Common myeloid progenitor, CD34-positive (primary cell): ENCODE measurements at regions of chr16 and their contacts with region 1.

Region 1: DNA sequence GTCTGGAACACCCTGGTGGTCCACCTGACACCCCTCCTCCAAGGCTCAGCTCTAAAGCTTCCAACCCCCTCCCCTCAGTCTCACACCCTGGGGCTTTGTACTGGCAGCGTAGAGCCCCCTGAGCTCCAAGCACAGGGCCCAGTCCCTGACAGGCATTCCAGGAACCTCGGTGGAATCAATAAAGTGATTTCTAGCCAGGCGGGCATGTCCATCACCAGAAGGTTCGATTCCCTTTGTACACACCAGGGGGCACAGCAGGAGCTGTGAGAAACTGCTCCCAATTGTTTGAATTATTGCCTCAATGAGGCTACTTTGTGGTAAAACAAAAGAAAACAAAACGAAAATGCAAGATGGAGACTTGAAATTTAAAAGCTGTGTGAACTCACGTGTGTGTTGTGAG is 51.8 kb downstream of the SMPD3 start:
- DNase-seq: peak; percentile 48 to 72 (median 70)
- H3K4me3 ChIP-seq: no peak overlapping the region
- H3K27ac ChIP-seq: no peak overlapping the region
- H3K4me1 ChIP-seq: peaks cover 0 to 2% (median 0%) of the 10 kb centered on the region in 4 experiments
- H3K27me3 ChIP-seq: no peaks in the 10 kb centered on the region

Region 2: DNA sequence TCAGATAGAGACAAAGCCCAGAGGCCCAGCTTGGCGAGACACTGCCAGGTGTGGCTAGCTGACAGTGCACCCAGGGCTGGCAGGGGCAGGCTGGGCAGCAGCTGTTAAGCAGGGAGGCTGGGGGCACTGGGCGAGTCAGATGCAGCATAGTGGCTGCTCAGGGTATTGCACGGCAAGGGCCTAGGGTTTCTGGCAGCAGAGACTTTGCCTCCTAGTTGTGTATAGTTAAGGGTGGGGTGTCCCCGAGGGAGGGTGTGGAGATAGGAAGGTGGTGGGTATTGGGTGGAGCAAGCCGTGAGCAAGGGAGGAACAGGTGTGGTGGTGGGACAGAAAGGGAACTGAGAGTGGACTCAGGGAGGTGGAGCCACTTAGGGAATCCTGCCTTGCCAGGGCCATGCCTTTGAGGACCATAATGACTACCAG is 14.2 kb before region 1 on chr16:
- CTCF ChIA-PET with region 1: interaction called, 17 read pairs
- POLR2A ChIA-PET with region 1: no interaction called
- DNase-seq: peak in 2 of 3 donors; percentile 34 to 46
- H3K4me3 ChIP-seq: no peak overlapping the region
- H3K27ac ChIP-seq: no peak overlapping the region
- H3K4me1 ChIP-seq: peaks cover 2 to 44% (median 23%) of the 10 kb centered on the region in 4 experiments
- H3K27me3 ChIP-seq: no peaks in the 10 kb centered on the region

Region 3: DNA sequence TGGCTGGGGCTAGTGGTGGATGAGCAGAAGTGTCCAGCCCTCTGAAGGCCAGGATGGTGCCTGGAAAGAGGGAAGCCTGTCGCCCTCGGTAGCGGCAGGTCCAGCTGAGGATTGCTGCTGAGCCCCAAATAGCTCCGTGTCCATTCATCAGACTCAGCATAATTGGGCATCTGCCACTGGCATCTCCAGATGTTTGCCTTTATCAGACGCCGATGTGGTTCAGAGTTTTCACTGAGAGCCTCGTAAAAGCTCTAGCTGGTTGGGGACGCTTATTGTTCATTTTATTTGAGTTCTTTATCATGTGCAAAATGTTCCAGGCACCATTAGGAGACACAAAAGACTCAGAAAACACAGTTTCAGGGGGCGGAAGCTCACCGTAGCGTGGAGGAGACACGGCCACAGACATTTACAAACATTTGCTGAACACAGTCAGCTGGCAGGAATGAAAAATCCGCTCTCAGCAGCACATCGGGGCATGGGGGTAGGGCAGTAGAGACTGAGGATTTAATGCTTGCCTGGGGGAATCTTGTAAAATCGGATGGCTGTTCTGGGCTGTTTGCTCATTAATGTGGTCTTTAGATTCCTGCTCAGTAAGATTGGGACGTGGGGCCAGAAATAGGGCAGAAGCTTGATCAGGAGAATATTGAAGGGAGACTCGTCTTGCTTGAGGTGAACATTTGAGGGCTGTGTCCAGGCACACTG is 10.1 kb after region 1 on chr16:
- CTCF ChIA-PET with region 1: interaction called, 31 read pairs
- POLR2A ChIA-PET with region 1: no interaction called
- DNase-seq: no peak
- H3K4me3 ChIP-seq: no peak overlapping the region
- H3K27ac ChIP-seq: no peak overlapping the region
- H3K4me1 ChIP-seq: no peaks in the 10 kb centered on the region
- H3K27me3 ChIP-seq: no peaks in the 10 kb centered on the region

Region 4: DNA sequence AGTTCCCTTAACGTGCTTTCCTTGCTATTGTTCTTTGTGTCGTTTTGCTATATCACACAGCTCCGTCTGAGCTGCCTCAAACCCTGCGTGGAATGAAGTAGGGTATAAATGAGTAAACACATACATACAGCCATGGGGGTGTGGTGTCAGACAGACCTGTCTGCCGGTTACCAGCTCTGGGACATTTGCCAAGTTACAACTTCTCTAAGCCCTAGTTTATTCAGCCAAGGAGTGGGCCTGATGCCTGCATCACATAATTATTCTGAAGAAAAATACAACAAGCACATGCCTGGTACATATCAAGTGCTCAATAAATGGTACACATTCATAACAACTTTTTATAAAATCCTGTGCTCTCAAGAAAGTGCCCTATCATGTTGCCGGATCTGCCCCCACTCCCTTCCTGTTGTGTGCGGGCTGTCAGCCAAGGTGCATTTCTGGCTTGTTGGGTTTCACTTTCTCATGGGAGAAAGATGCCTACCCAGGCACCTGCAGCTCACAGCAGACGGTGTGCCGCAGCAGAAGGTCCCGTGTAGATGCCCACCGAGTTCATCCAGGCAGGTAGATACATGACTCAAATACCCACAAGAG is 21.3 kb after region 1 on chr16:
- CTCF ChIA-PET with region 1: interaction called, 49 read pairs
- POLR2A ChIA-PET with region 1: no interaction called
- DNase-seq: peak; percentile 67 to 89 (median 87)
- H3K4me3 ChIP-seq: peak overlapping the region in 3 of 7 experiments; percentile 15 to 60 (median 40)
- H3K27ac ChIP-seq: no peak overlapping the region
- H3K4me1 ChIP-seq: peaks cover 2 to 34% (median 21%) of the 10 kb centered on the region in 4 experiments
- H3K27me3 ChIP-seq: no peaks in the 10 kb centered on the region

Region 5: GRCh38 chr16:68512183-68512582 is 115.7 kb after region 1 on chr16:
- CTCF ChIA-PET with region 1: interaction called, 36 read pairs
- POLR2A ChIA-PET with region 1: no interaction called
- DNase-seq: peak in 1 of 3 donors; percentile 26
- H3K4me3 ChIP-seq: no peak overlapping the region
- H3K27ac ChIP-seq: no peak overlapping the region
- H3K4me1 ChIP-seq: peaks cover 0 to 25% (median 9%) of the 10 kb centered on the region in 4 experiments
- H3K27me3 ChIP-seq: peaks cover 0 to 2% (median 0%) of the 10 kb centered on the region in 5 experiments

Region 6: DNA sequence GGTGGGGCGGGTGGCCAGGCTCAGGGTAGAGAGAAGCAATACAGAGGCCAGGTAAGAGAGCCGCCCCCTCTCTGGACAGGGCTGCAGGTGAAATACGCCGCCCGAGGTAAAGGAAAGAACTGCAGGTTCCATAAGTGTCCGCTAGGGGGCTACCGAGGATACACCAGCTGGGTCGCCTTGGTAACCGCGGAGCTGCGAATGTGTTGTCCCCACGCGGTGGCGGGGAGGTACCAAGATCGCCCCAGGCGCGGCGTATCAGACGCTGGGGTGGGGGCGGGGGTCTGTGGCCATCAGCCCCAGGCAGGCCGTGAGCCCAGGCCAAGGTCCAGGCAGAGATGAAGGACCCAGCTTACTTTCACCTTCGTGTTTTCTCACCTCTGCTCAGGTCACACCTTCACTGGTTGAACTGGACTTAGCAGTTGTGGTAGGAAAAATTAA is 124.2 kb after region 1 on chr16:
- CTCF ChIA-PET with region 1: interaction called, 15 read pairs
- POLR2A ChIA-PET with region 1: no interaction called
- DNase-seq: peak; percentile 88 to 93 (median 93)
- H3K4me3 ChIP-seq: peak overlapping the region in 3 of 7 experiments; percentile 24 to 52 (median 32)
- H3K27ac ChIP-seq: no peak overlapping the region
- H3K4me1 ChIP-seq: peaks cover 0 to 27% (median 19%) of the 10 kb centered on the region in 4 experiments
- H3K27me3 ChIP-seq: no peaks in the 10 kb centered on the region